ENCODE measurements at regions of chr17 and their contacts with region 1.

Region 1: DNA sequence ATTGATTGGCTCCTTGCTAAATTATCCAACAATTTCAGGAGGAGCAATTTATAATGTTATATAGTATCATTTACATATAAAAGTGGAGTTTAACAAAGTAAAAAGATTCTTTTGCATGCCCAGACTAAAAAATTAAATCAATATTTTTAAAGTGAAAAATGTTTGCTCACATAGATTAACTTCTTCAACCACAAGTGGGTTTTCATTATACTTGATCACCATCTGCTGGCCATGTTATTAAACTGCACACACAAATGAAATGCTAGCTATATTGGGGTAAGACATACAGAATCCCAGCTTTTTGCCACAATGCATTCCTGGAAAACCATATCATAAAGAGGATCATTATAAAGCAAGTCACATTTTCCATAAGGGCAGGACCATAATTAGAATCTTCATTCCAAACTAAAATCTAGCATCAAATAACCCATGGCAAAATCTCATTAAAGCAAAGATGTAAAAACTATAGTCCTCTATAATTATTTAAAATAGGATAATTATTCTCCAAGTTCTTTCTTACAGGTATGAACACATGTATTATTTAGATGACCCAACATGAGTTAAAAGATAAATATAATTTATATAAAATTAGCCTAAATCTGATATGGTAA is 26.3 kb downstream of the CEP112 start:
- DNase-seq: peak; percentile 78
- H3K4me3 ChIP-seq: no peak overlapping the region; a peak in 1 of 4 replicates
- H3K27ac ChIP-seq: no peak overlapping the region; a peak in 1 of 4 replicates
- H3K4me1 ChIP-seq: no peaks in the 10 kb centered on the region
- H3K27me3 ChIP-seq: no peaks in the 10 kb centered on the region
- CTCF ChIP-seq: peak; percentile 98
- EP300 ChIP-seq: no peak
- RAD21 ChIP-seq: peak; percentile 99

Region 2: DNA sequence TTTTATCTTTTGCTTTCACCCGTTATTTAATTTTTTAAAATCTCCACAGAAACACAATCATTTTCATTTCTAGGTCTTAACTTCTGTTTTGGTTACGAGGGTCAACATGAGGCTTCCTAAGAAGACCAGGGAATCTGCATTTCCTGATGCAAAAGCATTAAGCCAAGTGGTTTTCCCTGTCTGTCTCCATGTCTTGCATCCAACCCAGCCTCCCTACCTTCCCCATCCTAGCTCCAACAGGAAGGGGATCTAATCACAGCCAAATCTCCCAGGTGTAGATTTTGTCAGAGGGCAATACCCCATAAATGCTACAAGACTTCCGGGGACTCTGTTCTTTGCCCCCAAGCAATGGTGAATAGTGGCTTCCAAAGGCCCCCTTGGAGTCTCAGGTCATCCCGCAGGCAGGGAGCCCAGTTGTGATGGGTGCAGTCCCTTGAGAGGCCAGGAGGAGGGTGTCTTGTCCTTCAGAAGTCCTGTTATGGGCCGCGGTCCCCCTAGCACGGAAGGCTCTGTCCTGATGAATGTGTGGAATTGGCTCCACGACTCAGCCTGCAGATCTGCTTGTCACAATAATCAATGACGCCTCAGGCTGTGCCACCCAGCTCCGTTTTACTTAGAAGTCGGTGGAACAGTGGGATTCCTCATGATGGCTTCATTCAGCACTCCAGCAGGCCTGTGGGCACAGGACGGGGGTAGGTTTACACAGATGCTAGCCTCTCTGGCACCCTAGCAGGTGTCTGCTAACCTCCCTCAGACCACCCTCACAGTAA is 887.4 kb before region 1 on chr17:
- CTCF ChIA-PET with region 1: interaction called, 33 read pairs
- POLR2A ChIA-PET with region 1: no interaction called
- DNase-seq: peak; percentile 89
- H3K4me3 ChIP-seq: no peak overlapping the region
- H3K27ac ChIP-seq: no peak overlapping the region
- H3K4me1 ChIP-seq: no peaks in the 10 kb centered on the region; a peak in 1 of 4 replicates
- H3K27me3 ChIP-seq: no peaks in the 10 kb centered on the region
- CTCF ChIP-seq: peak; percentile 87
- EP300 ChIP-seq: no peak
- RAD21 ChIP-seq: peak; percentile 91

Region 3: GRCh38 chr17:65287040-65287439 is 878.6 kb before region 1 on chr17:
- CTCF ChIA-PET with region 1: interaction called, 135 read pairs
- POLR2A ChIA-PET with region 1: no interaction called
- DNase-seq: no peak
- H3K4me3 ChIP-seq: no peak overlapping the region
- H3K27ac ChIP-seq: peak overlapping the region in 1 of 2 experiments; percentile 23; a peak in 1 of 4 replicates
- H3K4me1 ChIP-seq: peaks cover 0 to 9% of the 10 kb centered on the region in 2 experiments; a peak in 2 of 4 replicates
- H3K27me3 ChIP-seq: no peaks in the 10 kb centered on the region
- CTCF ChIP-seq: no peak
- EP300 ChIP-seq: peak in 1 of 2 experiments; percentile 46; a peak in 2 of 4 replicates
- RAD21 ChIP-seq: no peak

Region 4: DNA sequence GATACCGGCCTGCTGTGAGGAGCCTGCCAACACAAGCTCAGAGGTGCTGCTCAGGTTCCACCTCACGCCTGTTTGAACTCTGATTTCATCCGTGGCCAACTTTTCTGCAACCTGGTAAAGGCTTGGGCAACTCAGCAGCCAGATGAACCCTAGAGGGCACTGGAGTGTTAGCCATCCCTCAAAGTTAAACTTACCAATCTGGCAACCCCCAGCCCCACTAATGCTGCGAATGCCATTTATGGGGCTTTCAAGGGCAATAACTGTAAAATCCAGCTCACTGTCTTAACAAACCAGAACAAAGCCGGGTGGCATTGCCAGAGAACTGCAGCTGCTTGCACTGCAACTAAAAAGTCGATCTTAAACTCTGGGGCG is 709.7 kb before region 1 on chr17:
- CTCF ChIA-PET with region 1: interaction called, 20 read pairs
- POLR2A ChIA-PET with region 1: no interaction called
- DNase-seq: peak; percentile 58
- H3K4me3 ChIP-seq: no peak overlapping the region
- H3K27ac ChIP-seq: no peak overlapping the region
- H3K4me1 ChIP-seq: no peaks in the 10 kb centered on the region
- H3K27me3 ChIP-seq: no peaks in the 10 kb centered on the region; the same call in 1 of the 2 replicates
- CTCF ChIP-seq: peak; percentile 52
- EP300 ChIP-seq: no peak
- RAD21 ChIP-seq: peak; percentile 81

Region 5: DNA sequence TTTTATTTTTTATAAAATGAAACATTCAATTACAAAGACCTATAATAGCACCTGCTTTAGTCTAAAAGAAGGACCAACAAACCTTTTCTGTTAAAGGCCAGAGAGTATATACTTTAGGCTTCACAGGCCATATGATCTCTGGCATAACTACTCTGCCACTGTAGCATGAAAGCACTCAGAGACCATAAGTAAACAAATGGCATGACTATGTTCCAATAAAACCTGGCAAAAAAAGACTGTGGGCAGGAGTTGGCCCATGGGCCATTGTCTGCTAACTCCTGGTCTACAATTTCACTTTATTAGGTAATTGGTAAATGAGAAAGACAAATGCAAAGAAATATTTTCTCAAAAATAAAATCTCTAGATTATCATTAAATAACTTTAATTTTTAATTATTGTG is 11.4 kb after region 1 on chr17:
- CTCF ChIA-PET with region 1: interaction called, 29 read pairs
- POLR2A ChIA-PET with region 1: no interaction called
- DNase-seq: no peak
- H3K4me3 ChIP-seq: no peak overlapping the region
- H3K27ac ChIP-seq: no peak overlapping the region
- H3K4me1 ChIP-seq: no peaks in the 10 kb centered on the region
- H3K27me3 ChIP-seq: no peaks in the 10 kb centered on the region
- CTCF ChIP-seq: no peak
- EP300 ChIP-seq: no peak
- RAD21 ChIP-seq: no peak